PC-9 (cell line): ENCODE measurements at regions of chr12 and their contacts with region 1.

Region 1: GRCh38 chr12:122003651-122004611 is 17.8 kb upstream of the BCL7A start:
- DNase-seq: no peak
- H3K4me3 ChIP-seq: no peak overlapping the region
- H3K27ac ChIP-seq: no peak overlapping the region
- H3K4me1 ChIP-seq: no peaks in the 10 kb centered on the region
- H3K27me3 ChIP-seq: no peaks in the 10 kb centered on the region
- CTCF ChIP-seq: no peak

Region 2: DNA sequence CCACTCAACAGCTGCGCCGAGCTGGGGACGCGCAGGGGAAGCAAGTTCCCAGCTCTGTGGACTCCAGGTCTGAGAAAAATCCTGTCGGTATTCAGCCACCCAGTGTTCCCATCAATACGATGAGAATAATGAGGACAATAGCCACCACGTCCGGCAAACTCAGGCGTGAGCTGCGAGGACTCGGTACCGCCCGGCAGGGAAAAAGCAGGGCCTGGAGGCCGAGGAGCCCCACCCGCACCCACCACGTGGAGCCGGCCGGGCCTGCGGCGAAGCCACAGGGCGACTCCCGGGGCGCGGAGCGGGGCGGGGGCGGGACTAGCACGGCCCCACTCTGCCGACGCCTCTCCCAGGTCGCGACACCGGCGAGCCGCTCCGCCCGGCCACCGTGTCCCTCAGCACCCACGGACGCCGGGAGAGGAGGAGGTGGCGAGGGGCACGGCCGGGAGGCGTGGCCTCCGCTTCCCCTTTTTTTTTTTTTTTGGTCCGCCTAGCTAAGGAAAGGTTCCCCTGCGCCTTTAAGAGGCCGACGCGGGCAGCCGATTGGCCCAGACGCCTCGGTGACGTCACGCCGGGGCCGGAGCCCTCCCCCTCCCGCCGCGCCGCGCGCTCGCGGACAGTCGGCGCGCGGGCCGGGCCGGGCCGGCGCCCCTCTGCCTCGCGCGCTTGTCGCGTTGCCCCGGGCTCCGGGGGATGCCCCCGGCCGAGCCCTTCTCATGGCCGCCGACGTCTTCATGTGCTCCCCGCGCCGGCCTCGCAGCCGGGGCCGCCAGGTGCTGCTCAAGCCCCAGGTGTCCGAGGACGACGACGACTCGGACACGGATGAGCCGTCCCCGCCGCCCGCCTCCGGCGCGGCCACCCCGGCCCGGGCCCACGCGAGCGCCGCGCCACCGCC is 74.5 kb after region 1 on chr12 and contains the start of gene MLXIP:
- CTCF ChIA-PET with region 1: no interaction called
- POLR2A ChIA-PET with region 1: no interaction called
- intact Hi-C with region 1: no loop called
- DNase-seq: peak; percentile 74 to 91
- H3K4me3 ChIP-seq: peak within 1 kb of the TSS; percentile 73
- H3K27ac ChIP-seq: peak within 1 kb of the TSS; percentile 42
- H3K4me1 ChIP-seq: peaks cover 32% of the 10 kb centered on the region
- H3K27me3 ChIP-seq: no peaks in the 10 kb centered on the region
- CTCF ChIP-seq: no peak
- total RNA-seq, gene MLXIP: 62.1 and 83.3 TPM in 2 replicates

Region 3: DNA sequence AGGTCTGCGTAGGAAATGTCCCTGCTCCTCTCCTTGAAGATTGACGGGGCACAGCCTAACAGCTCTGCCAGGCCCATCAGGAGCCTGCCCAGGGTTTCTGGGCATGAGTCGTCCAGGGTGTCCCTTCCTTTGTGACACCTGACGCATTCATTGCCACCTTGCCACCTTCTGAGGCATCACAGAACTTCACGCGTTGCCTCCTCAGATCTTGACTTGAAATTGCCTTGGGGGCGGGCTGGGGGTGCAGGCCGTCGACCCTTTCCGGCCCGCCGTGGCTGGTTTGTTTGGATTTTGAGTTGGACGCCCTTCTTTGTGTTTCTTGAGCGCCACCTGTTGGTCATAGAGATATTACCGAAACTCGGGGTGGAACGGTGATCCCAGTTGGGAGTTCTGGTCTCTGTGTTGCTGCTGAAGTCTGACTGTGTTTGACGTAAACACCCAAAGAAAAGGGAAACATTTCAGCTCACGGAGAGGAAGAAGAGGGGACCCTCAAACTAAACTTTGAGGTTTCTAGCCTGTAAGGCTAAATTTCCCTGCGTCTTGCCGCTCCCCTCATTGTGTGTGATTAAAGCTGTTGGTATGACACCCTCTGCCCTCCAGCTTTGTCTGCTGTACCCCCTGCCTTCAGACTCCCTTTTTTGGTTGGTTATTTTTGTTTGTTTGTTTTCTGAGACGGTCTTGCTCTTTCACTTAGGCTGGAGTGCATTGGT is 119.3 kb after region 1 on chr12:
- CTCF ChIA-PET with region 1: interaction called, 13 read pairs
- POLR2A ChIA-PET with region 1: no interaction called
- intact Hi-C with region 1: no loop called
- DNase-seq: peak; percentile 53 to 70
- H3K4me3 ChIP-seq: no peak overlapping the region
- H3K27ac ChIP-seq: peak overlapping the region; percentile 49
- H3K4me1 ChIP-seq: peaks cover 5% of the 10 kb centered on the region; the same call in 1 of the 2 replicates
- H3K27me3 ChIP-seq: no peaks in the 10 kb centered on the region
- CTCF ChIP-seq: peak; percentile 89